ENCODE measurements at regions of chr7 and their contacts with region 1.

Region 1: GRCh38 chr7:130912862-130913631 is 179.0 kb upstream of the KLF14 start:
- DNase-seq: peak; percentile 95
- H3K4me3 Mint-ChIP-seq: peak overlapping the region; percentile 86
- H3K27ac Mint-ChIP-seq: peak overlapping the region; percentile 89
- H3K4me1 Mint-ChIP-seq: peaks cover 68% of the 10 kb centered on the region
- H3K27me3 Mint-ChIP-seq: no peaks in the 10 kb centered on the region
- CTCF ChIP-seq: no peak

Region 2: DNA sequence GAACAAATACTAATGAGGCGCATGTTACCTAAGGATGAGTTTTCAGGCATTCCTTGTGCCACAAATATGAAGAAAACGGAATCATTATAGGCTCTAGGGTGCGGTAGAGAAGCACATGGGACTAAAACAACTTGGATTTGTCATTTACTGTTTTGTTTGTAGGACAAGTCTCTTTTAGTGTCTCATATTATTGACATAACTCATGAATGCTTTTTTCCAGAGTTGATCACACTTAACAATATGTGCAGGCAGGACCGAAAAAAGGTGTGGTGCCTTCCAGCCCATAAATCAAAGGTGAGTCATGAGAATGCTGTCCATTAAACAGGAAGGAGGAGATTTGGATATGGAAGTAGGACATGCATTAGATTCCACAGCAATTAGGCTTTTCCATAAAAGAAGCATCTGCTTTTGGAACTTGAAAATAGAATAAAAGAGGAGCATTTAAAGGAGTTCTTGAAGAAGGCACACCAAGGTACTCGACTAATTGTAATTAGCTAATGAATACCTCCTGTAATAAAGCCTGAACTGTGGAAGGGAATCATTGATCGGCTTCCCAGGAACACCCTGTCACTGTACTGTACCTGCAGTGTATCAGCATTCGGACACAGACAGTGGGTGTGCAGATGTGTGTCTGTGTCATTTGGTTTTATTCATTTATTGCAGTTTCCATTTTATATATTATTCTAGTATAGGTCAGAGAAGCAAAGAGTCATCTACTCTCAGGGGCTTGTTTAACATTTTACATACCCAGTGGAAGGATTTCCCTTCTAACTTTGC is 59.4 kb before region 1 on chr7:
- CTCF ChIA-PET with region 1: no interaction called
- POLR2A ChIA-PET with region 1: interaction called, 10 read pairs
- intact Hi-C with region 1: no loop called
- DNase-seq: peak; percentile 84
- H3K4me3 Mint-ChIP-seq: peak overlapping the region; percentile 29
- H3K27ac Mint-ChIP-seq: peak overlapping the region; percentile 24
- H3K4me1 Mint-ChIP-seq: peaks cover 31% of the 10 kb centered on the region
- H3K27me3 Mint-ChIP-seq: no peaks in the 10 kb centered on the region
- CTCF ChIP-seq: no peak

Region 3: DNA sequence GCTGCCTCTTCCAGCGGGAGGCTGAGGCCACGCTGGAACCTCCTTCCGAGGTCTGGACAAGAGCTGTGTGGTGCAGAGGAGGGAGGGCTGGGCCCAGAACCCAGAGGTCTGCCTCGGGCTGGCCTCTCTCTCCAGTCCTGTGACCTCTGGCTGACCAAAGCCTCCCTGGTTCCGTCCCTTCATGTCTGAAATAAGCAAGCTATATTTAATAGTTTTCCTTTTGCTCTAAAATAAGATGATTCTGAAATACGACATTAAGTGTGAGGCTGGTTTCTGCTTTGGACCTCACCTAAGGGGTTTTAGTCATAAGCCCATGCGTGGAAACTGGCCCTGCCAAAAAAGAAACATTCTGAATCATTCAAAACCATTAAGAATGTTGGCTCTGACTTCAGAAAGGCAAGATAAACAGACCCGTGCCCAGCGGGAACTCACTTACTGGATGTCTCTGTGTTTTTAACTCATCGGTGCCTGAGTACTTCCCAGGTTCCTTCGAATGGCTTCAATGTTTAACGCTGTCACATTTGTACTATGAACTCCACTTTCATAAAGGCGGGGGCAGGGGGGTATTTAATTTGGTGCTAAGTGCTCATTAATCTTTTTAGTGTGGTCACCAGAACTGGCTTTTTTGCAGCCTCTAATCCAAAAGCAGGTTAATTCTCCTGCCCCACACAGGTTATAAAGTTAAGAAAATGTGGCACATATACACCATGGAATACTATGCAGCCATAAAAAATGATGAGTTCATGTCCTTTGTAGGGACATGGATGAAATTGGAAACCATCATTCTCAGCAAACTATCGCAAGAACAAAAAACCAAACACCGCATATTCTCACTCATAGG is 21.6 kb before region 1 on chr7:
- CTCF ChIA-PET with region 1: interaction called, 105 read pairs
- POLR2A ChIA-PET with region 1: interaction called, 263 read pairs
- intact Hi-C with region 1: loop called (anchors 2 kb)
- DNase-seq: peak; percentile 97
- H3K4me3 Mint-ChIP-seq: peak overlapping the region; percentile 69
- H3K27ac Mint-ChIP-seq: peak overlapping the region; percentile 95
- H3K4me1 Mint-ChIP-seq: peaks cover 78% of the 10 kb centered on the region
- H3K27me3 Mint-ChIP-seq: no peaks in the 10 kb centered on the region
- CTCF ChIP-seq: no peak

Region 4: GRCh38 chr7:130941322-130942210 is 28.5 kb after region 1 on chr7:
- CTCF ChIA-PET with region 1: interaction called, 7 read pairs
- POLR2A ChIA-PET with region 1: interaction called, 6 read pairs
- intact Hi-C with region 1: loop called (anchors 2 kb)
- DNase-seq: peak; percentile 41
- H3K4me3 Mint-ChIP-seq: peak overlapping the region; percentile 76
- H3K27ac Mint-ChIP-seq: peak overlapping the region; percentile 90
- H3K4me1 Mint-ChIP-seq: peaks cover 70% of the 10 kb centered on the region
- H3K27me3 Mint-ChIP-seq: no peaks in the 10 kb centered on the region
- CTCF ChIP-seq: no peak

Region 5: DNA sequence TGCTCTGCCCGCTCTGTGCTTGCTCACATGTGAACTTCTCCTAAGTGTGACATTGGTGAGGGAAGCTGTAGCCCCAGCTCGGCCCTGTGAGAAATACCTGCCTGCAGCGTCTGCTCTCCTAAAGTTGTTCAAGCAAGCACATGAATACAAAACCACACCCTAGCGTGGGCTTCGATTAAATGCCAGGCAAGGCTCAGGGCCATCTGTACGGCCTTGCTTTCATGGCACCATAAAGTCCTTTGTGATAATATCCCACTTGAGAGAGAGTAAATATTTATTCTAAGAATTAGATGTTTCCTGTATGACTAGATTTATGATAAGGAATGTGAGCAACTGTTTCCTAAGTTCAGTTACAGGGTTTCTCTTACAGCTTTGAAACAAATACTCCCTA is 83.8 kb after region 1 on chr7:
- CTCF ChIA-PET with region 1: interaction called, 3 read pairs
- POLR2A ChIA-PET with region 1: interaction called, 65 read pairs
- intact Hi-C with region 1: no loop called
- DNase-seq: peak; percentile 73
- H3K4me3 Mint-ChIP-seq: peak overlapping the region; percentile 21
- H3K27ac Mint-ChIP-seq: peak overlapping the region; percentile 96
- H3K4me1 Mint-ChIP-seq: peaks cover 54% of the 10 kb centered on the region
- H3K27me3 Mint-ChIP-seq: no peaks in the 10 kb centered on the region
- CTCF ChIP-seq: no peak

Region 6: DNA sequence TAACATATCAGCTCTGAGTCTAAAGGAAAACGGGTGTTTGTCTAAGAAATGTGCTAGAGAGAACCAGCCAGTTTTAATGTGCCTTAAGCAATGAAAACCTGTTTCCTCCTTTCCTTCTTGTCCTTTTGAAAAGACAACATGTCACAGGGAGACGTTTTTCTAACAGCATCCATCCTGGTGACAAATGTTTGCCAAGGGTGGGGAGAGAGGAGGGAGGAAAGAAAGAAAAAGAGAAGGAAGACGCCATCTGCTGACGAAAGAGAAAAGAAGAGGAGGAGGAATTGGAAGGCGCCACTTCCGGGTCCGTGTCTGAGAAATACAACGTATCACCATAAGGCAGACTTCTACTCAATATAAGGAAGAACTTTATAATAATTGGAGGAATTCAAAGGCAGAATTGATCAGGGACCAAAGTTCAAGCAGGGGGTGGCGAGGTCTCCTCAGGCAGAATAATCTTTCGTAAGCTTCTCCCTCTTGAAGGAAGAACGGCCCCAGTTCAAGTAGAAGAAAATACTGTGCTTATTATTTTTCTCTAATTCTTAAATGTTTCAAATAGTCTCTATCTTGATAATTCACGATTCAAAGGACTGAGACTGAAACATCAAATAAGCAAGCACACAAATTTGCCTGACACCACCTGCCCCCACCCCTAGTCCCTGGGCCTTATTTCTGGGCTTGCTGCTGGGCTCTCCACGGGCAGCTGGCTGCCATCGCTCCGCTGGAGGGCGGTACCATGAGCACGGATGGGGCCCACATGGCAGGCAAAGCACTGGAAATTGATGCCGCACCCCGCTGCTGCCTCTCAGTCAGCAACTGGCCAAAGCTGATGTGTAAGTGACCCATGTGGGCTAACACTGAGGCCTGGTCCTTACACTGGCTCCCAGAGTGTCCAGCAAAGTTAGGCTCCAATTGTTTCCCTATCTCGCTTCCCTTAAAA is 94.6 kb after region 1 on chr7:
- CTCF ChIA-PET with region 1: interaction called, 3 read pairs
- POLR2A ChIA-PET with region 1: interaction called, 38 read pairs
- intact Hi-C with region 1: no loop called
- DNase-seq: peak; percentile 87
- H3K4me3 Mint-ChIP-seq: peak overlapping the region; percentile 15
- H3K27ac Mint-ChIP-seq: peak overlapping the region; percentile 84
- H3K4me1 Mint-ChIP-seq: peaks cover 46% of the 10 kb centered on the region
- H3K27me3 Mint-ChIP-seq: no peaks in the 10 kb centered on the region
- CTCF ChIP-seq: peak; percentile 58

Region 7: DNA sequence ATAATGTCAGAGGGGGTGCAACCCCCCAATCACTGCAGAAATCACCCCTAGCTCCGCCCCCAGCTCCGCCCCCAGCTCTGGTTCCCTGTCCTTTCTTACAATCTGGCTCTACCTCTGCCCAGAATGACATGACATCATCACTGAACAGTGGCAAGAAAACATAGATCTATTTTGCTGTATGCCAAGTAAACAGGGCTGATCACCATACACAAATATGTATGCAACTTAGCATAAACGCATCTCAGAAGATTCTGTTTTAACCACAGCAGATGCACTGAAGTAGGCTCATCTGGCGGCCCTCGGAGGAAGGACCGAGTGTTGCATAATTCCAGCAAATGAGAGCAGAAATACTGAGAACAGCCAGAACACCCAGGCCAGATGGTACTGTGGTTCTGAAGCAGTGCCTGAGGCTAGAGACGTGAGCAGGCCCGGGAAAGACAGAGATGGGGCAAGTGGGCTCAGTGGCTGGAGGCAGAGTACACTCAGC is 114.3 kb after region 1 on chr7:
- CTCF ChIA-PET with region 1: no interaction called
- POLR2A ChIA-PET with region 1: interaction called, 14 read pairs
- intact Hi-C with region 1: loop called (anchors 5 kb)
- DNase-seq: peak; percentile 89
- H3K4me3 Mint-ChIP-seq: peak overlapping the region; percentile 64
- H3K27ac Mint-ChIP-seq: peak overlapping the region; percentile 88
- H3K4me1 Mint-ChIP-seq: peaks cover 31% of the 10 kb centered on the region
- H3K27me3 Mint-ChIP-seq: no peaks in the 10 kb centered on the region
- CTCF ChIP-seq: no peak

Measured in MCF 10A (cell line).